ENCODE measurements at regions of chr17 and their contacts with region 1.

Region 1: GRCh38 chr17:58352014-58352842 is at the start of gene SUPT4H1:
- DNase-seq: peak; percentile 96
- H3K4me3 Mint-ChIP-seq: peak within 1 kb of the TSS; percentile 100
- H3K27ac Mint-ChIP-seq: peak within 1 kb of the TSS; percentile 99
- H3K4me1 Mint-ChIP-seq: peaks cover 50% of the 10 kb centered on the region
- H3K27me3 Mint-ChIP-seq: no peaks in the 10 kb centered on the region
- total RNA-seq, gene SUPT4H1: 113 to 114 TPM

Region 2: GRCh38 chr17:58082870-58083490 is 269.2 kb before region 1 on chr17 and contains the start of gene DYNLL2:
- CTCF ChIA-PET with region 1: no interaction called
- POLR2A ChIA-PET with region 1: no interaction called
- intact Hi-C with region 1: loop called (anchors 5 kb)
- DNase-seq: peak; percentile 94
- H3K4me3 Mint-ChIP-seq: peak within 1 kb of the TSS; percentile 84
- H3K27ac Mint-ChIP-seq: peak within 1 kb of the TSS; percentile 81
- H3K4me1 Mint-ChIP-seq: peaks cover 33% of the 10 kb centered on the region
- H3K27me3 Mint-ChIP-seq: no peaks in the 10 kb centered on the region
- total RNA-seq, gene DYNLL2: 24.8 to 26.8 TPM

Region 3: DNA sequence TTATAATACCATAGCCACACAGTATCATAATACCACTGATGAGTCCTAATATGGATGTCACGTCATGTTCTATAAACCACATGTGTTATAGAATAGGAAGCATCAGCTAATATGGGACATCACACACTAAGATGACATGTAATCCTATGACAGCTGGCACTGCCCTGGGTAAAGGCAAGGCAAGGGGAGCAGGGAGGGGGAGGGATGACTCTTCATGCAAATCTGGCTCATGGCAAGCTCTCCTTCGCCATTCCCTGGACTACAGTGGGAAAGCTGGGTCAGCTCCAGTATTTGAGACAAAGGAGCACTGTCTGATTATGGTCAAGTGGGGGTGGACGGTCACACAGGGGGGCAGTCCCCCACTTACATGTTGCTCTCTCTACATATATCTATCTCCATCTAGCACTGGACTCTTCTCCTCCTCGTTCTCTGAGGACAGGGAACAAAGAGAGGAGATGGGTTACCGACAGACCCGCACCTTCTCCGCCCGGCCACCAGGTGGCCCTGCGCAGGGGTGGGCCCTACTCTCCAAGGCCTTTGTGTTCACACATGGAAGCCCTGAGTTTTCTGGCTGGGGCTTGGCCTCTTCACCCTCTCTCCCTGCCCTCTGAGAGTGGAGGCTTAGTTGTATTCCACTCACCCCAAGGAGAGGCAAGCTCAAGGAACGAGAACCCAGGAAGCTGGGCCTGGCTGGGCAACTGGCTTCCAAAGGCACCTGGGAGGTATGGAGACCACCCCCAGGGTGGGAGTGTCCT is 48.1 kb before region 1 on chr17:
- CTCF ChIA-PET with region 1: interaction called, 10 read pairs
- POLR2A ChIA-PET with region 1: interaction called, 3 read pairs
- intact Hi-C with region 1: no loop called
- DNase-seq: peak; percentile 72
- H3K4me3 Mint-ChIP-seq: no peak overlapping the region
- H3K27ac Mint-ChIP-seq: no peak overlapping the region
- H3K4me1 Mint-ChIP-seq: peaks cover 5% of the 10 kb centered on the region
- H3K27me3 Mint-ChIP-seq: no peaks in the 10 kb centered on the region

Region 4: DNA sequence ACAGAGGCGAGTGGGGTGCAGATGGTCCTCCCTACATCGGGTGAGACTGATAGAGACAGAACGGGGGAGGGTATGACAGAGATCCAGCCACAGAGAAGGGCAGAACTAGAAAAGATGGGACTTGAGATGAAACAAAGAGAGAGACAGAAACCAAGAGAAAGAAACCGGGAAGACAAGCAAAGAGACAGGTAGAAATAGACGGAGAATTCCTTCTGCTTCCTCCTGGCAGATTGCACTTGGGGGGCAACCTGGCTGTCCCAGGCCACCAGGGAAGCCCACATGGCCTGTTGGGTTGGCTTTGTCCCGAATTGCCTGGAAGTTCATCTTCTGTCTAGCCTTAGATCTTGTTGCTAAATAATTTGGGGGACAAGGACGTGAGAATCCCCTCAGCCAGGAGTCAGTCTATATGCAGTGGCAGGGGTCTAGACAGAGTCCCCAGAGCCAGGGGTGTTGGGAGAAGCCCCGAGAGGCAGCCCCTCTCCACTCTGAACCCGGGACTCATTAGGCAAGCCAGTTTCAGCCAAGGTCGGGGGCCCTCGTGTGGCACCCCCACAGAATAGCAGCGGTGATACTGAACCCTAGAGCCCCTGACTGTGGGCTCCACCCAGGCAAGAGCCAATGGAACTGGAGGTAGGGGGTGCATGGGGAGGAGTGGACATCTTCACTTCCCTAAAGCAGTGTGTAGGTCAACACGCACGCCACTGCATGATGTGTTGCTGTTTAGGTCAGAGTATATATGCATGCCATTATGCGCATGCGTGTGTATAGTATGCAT is 23.0 kb before region 1 on chr17:
- CTCF ChIA-PET with region 1: interaction called, 11 read pairs
- POLR2A ChIA-PET with region 1: interaction called, 1,114 read pairs
- intact Hi-C with region 1: loop called (anchors 1 kb)
- DNase-seq: peak; percentile 92
- H3K4me3 Mint-ChIP-seq: peak overlapping the region; percentile 92
- H3K27ac Mint-ChIP-seq: peak overlapping the region; percentile 98
- H3K4me1 Mint-ChIP-seq: peaks cover 44% of the 10 kb centered on the region
- H3K27me3 Mint-ChIP-seq: peaks cover 25% of the 10 kb centered on the region

Region 5: GRCh38 chr17:58337600-58338453 is 14.4 kb before region 1 on chr17:
- CTCF ChIA-PET with region 1: interaction called, 51 read pairs
- POLR2A ChIA-PET with region 1: interaction called, 1,114 read pairs
- intact Hi-C with region 1: loop called (anchors 1 kb)
- DNase-seq: peak; percentile 98
- H3K4me3 Mint-ChIP-seq: peak overlapping the region; percentile 92
- H3K27ac Mint-ChIP-seq: peak overlapping the region; percentile 98
- H3K4me1 Mint-ChIP-seq: peaks cover 22% of the 10 kb centered on the region
- H3K27me3 Mint-ChIP-seq: no peaks in the 10 kb centered on the region

Region 6: GRCh38 chr17:58382108-58382871 is 30.1 kb after region 1 on chr17:
- CTCF ChIA-PET with region 1: interaction called, 3 read pairs
- POLR2A ChIA-PET with region 1: interaction called, 11 read pairs
- intact Hi-C with region 1: no loop called
- DNase-seq: no peak
- H3K4me3 Mint-ChIP-seq: no peak overlapping the region
- H3K27ac Mint-ChIP-seq: peak overlapping the region; percentile 11
- H3K4me1 Mint-ChIP-seq: peaks cover 41% of the 10 kb centered on the region
- H3K27me3 Mint-ChIP-seq: no peaks in the 10 kb centered on the region

Region 7: DNA sequence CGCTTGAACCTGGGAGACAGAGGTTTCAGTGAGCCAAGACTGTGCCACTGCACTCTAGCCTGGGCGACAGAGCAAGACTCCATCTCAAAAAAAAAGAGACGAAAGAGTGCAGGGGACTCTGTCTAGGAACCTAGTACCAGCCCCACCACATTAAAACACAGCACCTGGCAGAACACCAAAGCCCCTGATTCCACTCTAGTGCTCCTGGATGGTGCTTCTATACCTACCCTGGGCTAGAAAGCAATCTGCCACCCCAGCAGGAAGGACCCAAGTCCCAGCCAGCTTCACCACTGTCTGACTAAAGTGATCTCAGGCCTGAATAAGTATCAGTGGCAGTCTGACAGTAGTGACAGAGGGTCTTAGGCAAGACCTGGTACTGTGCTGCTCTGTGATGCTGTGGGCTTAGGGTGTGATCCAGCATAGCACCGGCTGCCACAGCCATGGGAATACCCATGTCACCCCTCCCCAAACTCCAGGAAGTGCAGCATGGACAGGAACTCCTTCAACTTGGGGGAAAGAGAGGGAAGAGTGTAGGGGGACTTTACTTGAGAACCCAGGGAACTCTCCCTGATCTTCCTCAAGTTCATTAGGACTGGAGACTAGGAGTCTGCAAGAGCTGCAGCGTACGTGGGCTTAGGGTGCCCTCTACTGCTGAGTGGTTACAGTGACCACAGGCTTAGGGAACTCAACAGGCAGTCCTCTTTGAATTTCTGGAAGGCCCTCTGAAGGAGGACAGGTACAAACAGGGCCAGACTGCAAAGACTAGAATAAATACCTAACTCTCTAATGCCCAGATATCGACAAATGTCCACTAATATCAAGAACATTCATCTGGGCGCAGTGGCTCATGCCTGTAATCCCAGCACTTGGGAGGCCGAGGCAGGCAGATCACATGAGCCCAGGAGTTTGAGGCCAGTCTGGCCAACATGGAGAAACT is 95.1 kb after region 1 on chr17:
- CTCF ChIA-PET with region 1: no interaction called
- POLR2A ChIA-PET with region 1: interaction called, 3 read pairs
- intact Hi-C with region 1: loop called (anchors 1 kb)
- DNase-seq: peak; percentile 83
- H3K4me3 Mint-ChIP-seq: no peak overlapping the region
- H3K27ac Mint-ChIP-seq: no peak overlapping the region
- H3K4me1 Mint-ChIP-seq: peaks cover 9% of the 10 kb centered on the region
- H3K27me3 Mint-ChIP-seq: no peaks in the 10 kb centered on the region

Region 8: DNA sequence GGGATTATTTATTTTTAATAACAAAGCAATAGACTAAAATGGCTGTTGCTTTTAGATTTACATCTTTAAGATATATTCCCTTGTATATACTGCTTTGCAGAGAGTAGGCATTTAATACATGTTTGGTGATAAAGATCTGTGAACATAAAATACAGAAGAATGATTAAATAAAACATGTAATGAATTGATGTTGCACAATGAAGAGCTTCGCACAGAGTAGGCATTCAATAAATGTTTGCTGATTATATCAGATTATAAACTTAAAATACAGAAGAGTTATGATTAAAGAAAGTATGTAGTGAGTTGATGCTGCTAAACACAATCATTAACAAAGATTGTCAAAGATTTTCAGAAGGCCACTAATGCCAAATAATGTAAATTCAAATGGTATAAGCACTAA is 111.6 kb after region 1 on chr17:
- CTCF ChIA-PET with region 1: no interaction called
- POLR2A ChIA-PET with region 1: no interaction called
- intact Hi-C with region 1: no loop called
- DNase-seq: no peak
- H3K4me3 Mint-ChIP-seq: no peak overlapping the region
- H3K27ac Mint-ChIP-seq: no peak overlapping the region
- H3K4me1 Mint-ChIP-seq: no peaks in the 10 kb centered on the region
- H3K27me3 Mint-ChIP-seq: no peaks in the 10 kb centered on the region

Measured in activated CD4-positive, alpha-beta memory T cell treated with anti-CD3 and anti-CD28 coated beads for 36 hours (primary cell).